B cell (primary cell): ENCODE measurements at regions of chr17 and their contacts with region 1.

Region 1: GRCh38 chr17:81537343-81537855 is 9.2 kb downstream of the FSCN2 start:
- DNase-seq: peak; percentile 77
- ATAC-seq: peak; percentile 76
- H3K4me3 ChIP-seq: no peak overlapping the region
- H3K4me3 Mint-ChIP-seq: peak overlapping the region; percentile 29
- H3K27ac ChIP-seq: no peak overlapping the region
- H3K27ac Mint-ChIP-seq: no peak overlapping the region
- H3K4me1 ChIP-seq: peaks cover 21 to 36% of the 10 kb centered on the region in 2 donors
- H3K4me1 Mint-ChIP-seq: peaks cover 14% of the 10 kb centered on the region
- H3K27me3 ChIP-seq: peaks cover 0 to 31% (median 10%) of the 10 kb centered on the region in 4 experiments
- H3K27me3 Mint-ChIP-seq: peaks cover 7% of the 10 kb centered on the region
- CTCF ChIP-seq: peak; percentile 68

Region 2: DNA sequence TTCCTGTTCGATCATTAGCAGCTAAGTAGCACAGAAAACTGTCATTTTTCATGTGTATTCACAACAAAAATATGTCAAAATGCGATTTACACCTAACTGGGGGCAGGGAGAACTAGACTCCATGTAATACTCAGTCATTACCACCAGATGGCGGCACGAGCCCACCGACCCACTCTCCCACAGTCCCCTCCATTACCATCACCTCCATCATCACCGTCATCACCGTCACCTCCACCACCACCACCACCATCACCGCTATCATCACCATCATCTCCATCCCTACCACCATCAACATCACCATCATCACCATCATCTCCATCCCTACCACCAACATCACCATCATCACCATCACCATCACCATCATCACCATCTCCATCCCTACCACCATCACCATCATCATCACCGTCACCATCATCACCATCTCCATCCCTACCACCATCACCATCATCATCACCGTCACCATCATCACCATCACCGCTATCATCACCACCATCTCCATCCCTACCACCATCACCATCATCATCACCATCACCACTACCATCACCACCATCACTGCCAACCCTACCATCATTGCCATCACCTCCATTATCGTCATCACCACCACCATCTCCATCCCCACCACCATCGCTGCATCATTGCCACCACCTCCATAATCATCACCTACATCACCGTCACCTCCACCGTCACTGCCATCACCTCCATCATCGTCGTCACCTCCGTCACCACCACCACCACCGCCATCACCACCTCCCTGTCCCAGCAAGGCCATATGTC is 283.9 kb before region 1 on chr17:
- CTCF ChIA-PET with region 1: interaction called, 11 read pairs
- POLR2A ChIA-PET with region 1: interaction called, 3 read pairs
- intact Hi-C with region 1: no loop called
- DNase-seq: peak; percentile 77
- ATAC-seq: peak; percentile 83
- H3K4me3 ChIP-seq: no peak overlapping the region
- H3K4me3 Mint-ChIP-seq: no peak overlapping the region
- H3K27ac ChIP-seq: no peak overlapping the region
- H3K27ac Mint-ChIP-seq: peak overlapping the region; percentile 17
- H3K4me1 ChIP-seq: peaks cover 0 to 11% of the 10 kb centered on the region in 2 donors
- H3K4me1 Mint-ChIP-seq: peaks cover 7% of the 10 kb centered on the region
- H3K27me3 ChIP-seq: no peaks in the 10 kb centered on the region
- H3K27me3 Mint-ChIP-seq: no peaks in the 10 kb centered on the region
- CTCF ChIP-seq: peak; percentile 83

Region 3: GRCh38 chr17:81294856-81295680 is 242.3 kb before region 1 on chr17 and contains the start of gene SLC38A10:
- CTCF ChIA-PET with region 1: interaction called, 11 read pairs
- POLR2A ChIA-PET with region 1: no interaction called
- intact Hi-C with region 1: no loop called
- DNase-seq: peak; percentile 92
- ATAC-seq: peak; percentile 86
- H3K4me3 ChIP-seq: peak within 1 kb of the TSS; percentile 66 to 97 (median 91)
- H3K4me3 Mint-ChIP-seq: peak within 1 kb of the TSS; percentile 97
- H3K27ac ChIP-seq: peak within 1 kb of the TSS; percentile 75 to 94
- H3K27ac Mint-ChIP-seq: peak within 1 kb of the TSS; percentile 97
- H3K4me1 ChIP-seq: peaks cover 19 to 28% of the 10 kb centered on the region in 2 donors
- H3K4me1 Mint-ChIP-seq: peaks cover 43% of the 10 kb centered on the region
- H3K27me3 ChIP-seq: no peaks in the 10 kb centered on the region
- H3K27me3 Mint-ChIP-seq: no peaks in the 10 kb centered on the region
- CTCF ChIP-seq: no peak
- total RNA-seq, gene SLC38A10: 104 and 116 TPM in 2 replicates

Region 4: DNA sequence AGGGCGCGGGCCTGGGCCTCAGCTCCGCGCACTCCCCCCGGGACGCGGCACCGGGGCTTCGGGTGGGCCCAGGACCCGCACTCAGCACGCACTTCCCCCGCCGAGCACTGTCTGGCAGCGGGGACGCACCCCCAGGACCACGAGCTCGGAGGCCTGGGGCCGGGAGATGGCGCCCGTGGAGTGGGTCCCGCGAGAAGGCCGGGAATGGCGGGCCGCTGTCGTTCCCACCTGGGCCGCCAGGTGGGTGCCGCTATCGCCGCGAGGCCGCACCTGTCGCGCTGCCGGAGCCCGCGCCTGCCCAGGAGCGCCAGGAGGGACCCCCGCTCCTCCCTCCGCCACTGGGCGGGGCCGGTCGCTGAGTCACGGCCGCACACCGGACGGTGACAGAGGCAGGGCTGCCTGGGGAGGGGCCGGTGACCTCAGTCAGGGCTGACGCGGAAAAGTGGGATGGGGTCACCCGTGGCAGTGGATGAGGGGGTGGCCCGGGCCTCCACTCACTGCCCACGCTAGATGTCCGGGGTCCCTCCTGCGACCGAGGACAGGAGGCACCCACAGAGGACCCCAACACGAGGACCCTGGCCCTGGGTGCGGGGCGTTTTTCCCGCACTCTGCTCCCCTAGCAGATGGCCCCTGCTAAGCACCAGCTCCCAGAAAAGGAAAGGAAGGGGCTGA is 18.0 kb before region 1 on chr17:
- CTCF ChIA-PET with region 1: interaction called, 30 read pairs
- POLR2A ChIA-PET with region 1: interaction called, 5 read pairs
- intact Hi-C with region 1: loop called (anchors 1 kb)
- DNase-seq: peak; percentile 88
- ATAC-seq: peak; percentile 14
- H3K4me3 ChIP-seq: peak overlapping the region in 4 of 5 experiments; percentile 47 to 94 (median 64)
- H3K4me3 Mint-ChIP-seq: peak overlapping the region; percentile 98
- H3K27ac ChIP-seq: peak overlapping the region; percentile 97 to 98
- H3K27ac Mint-ChIP-seq: peak overlapping the region; percentile 86
- H3K4me1 ChIP-seq: peaks cover 37 to 55% of the 10 kb centered on the region in 2 donors
- H3K4me1 Mint-ChIP-seq: peaks cover 42% of the 10 kb centered on the region
- H3K27me3 ChIP-seq: no peaks in the 10 kb centered on the region
- H3K27me3 Mint-ChIP-seq: no peaks in the 10 kb centered on the region
- CTCF ChIP-seq: peak; percentile 87